ENCODE measurements at regions of chr11 and their contacts with region 1.

Region 1: DNA sequence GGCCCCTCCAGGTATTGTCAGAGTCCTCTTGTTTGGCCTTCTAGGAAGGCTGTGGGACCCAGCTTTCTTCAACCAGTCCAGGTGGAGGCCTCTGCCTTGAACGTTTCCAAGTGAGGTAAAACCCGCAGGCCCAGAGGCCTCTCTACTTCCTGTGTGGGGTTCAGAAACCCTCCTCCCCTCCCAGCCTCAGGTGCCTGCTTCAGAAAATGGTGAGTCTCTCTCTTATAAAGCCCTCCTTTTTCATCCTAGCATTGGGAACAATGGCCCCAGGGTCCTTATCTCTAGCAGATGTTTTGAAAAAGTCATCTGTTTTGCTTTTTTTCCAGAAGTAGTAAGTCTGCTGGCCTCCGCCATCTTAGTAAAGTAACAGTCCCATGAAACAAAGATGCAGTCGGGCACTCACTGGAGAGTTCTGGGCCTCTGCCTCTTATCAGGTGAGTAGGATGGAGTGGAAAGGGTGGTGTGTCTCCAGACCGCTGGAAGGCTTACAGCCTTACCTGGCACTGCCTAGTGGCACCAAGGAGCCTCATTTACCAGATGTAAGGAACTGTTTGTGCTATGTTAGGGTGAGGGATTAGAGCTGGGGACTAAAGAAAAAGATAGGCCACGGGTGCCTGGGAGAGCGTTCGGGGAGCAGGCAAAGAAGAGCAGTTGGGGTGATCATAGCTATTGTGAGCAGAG is at the start of gene CD3E:
- DNase-seq: no peak
- H3K4me3 ChIP-seq: no peak within 1 kb of the TSS
- H3K4me3 Mint-ChIP-seq: peak within 1 kb of the TSS in 1 of 2 donors; percentile 10
- H3K27ac ChIP-seq: no peak within 1 kb of the TSS
- H3K27ac Mint-ChIP-seq: peak within 1 kb of the TSS in 2 of 7 donors; percentile 61 to 73
- H3K4me1 ChIP-seq: no peaks in the 10 kb centered on the region
- H3K4me1 Mint-ChIP-seq: peaks cover 5% of the 10 kb centered on the region
- H3K27me3 ChIP-seq: no peaks in the 10 kb centered on the region
- H3K27me3 Mint-ChIP-seq: peaks cover 3 to 12% (median 4%) of the 10 kb centered on the region in 3 donors
- CTCF ChIP-seq: no peak
- polyA plus RNA-seq, gene CD3E: 0.12 to 1.6 (median 1.5) TPM

Region 2: GRCh38 chr11:118263695-118264567 is 40.8 kb before region 1 on chr11 and contains the start of gene MPZL2:
- intact Hi-C with region 1: loop called in 1 of 2 experiments (anchors 5 kb)
- DNase-seq: peak in 1 of 3 donors; percentile 12
- H3K4me3 ChIP-seq: peak within 1 kb of the TSS; percentile 39 to 79 (median 48)
- H3K4me3 Mint-ChIP-seq: peak within 1 kb of the TSS; percentile 92 to 100
- H3K27ac ChIP-seq: peak within 1 kb of the TSS; percentile 22 to 45
- H3K27ac Mint-ChIP-seq: peak within 1 kb of the TSS; percentile 40 to 87 (median 79)
- H3K4me1 ChIP-seq: peaks cover 33 to 44% of the 10 kb centered on the region in 2 donors
- H3K4me1 Mint-ChIP-seq: peaks cover 50% of the 10 kb centered on the region
- H3K27me3 ChIP-seq: no peaks in the 10 kb centered on the region
- H3K27me3 Mint-ChIP-seq: peaks cover 7 to 15% (median 8%) of the 10 kb centered on the region in 3 donors
- CTCF ChIP-seq: no peak
- polyA plus RNA-seq, gene MPZL2: 8.0 to 18.6 (median 14.2) TPM

Region 3: GRCh38 chr11:118338637-118339061 is 33.9 kb after region 1 on chr11:
- intact Hi-C with region 1: no loop called
- DNase-seq: no peak
- H3K4me3 ChIP-seq: no peak overlapping the region
- H3K4me3 Mint-ChIP-seq: peak overlapping the region in 1 of 2 donors; percentile 39
- H3K27ac ChIP-seq: no peak overlapping the region
- H3K27ac Mint-ChIP-seq: peak overlapping the region in 3 of 7 donors; percentile 2 to 85 (median 16)
- H3K4me1 ChIP-seq: no peaks in the 10 kb centered on the region
- H3K4me1 Mint-ChIP-seq: no peaks in the 10 kb centered on the region
- H3K27me3 ChIP-seq: no peaks in the 10 kb centered on the region
- H3K27me3 Mint-ChIP-seq: peaks cover 2 to 4% (median 4%) of the 10 kb centered on the region in 3 donors
- CTCF ChIP-seq: no peak

Region 4: GRCh38 chr11:118415739-118416284 is 111.1 kb after region 1 on chr11:
- intact Hi-C with region 1: no loop called
- DNase-seq: peak in 2 of 3 donors; percentile 51 to 76
- H3K4me3 ChIP-seq: no peak overlapping the region
- H3K4me3 Mint-ChIP-seq: no peak overlapping the region
- H3K27ac ChIP-seq: peak overlapping the region in 1 of 2 donors; percentile 21
- H3K27ac Mint-ChIP-seq: no peak overlapping the region
- H3K4me1 ChIP-seq: peaks cover 17 to 19% of the 10 kb centered on the region in 2 donors
- H3K4me1 Mint-ChIP-seq: no peaks in the 10 kb centered on the region
- H3K27me3 ChIP-seq: no peaks in the 10 kb centered on the region
- H3K27me3 Mint-ChIP-seq: peaks cover 0 to 8% (median 0%) of the 10 kb centered on the region in 3 donors
- CTCF ChIP-seq: no peak

Measured in CD14-positive monocyte (primary cell).